ENCODE measurements at regions of chr6 and their contacts with region 1.

Region 1: GRCh38 chr6:49409951-49410542 is 53.0 kb downstream of the MMUT start:
- DNase-seq: peak; percentile 61
- ATAC-seq: peak; percentile 97
- H3K4me3 ChIP-seq: no peak overlapping the region
- H3K27ac ChIP-seq: no peak overlapping the region
- H3K4me1 ChIP-seq: no peaks in the 10 kb centered on the region
- H3K27me3 ChIP-seq: no peaks in the 10 kb centered on the region
- CTCF ChIP-seq: peak; percentile 84
- POLR2A ChIP-seq: no peak
- RAD21 ChIP-seq: peak; percentile 80

Region 2: DNA sequence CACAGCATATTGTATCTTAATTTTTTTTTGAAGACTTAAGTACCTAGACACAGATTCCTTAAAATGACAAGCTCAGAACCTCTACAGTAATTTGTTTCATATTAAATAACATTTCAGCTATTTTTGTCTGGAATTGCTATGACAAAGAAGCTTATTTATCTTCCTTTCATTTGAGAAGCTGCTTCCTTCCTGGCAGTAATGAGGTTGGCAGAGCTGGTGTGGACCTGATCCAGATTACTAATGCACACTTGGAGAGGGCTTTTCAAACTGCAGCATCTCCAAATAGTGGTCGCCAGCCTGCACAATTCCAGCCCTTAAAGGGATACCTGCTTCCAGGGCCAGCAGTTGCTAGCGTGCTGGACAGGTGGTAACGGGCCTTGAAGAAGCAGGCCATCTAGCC is 1311.1 kb before region 1 on chr6:
- CTCF ChIA-PET with region 1: no interaction called
- POLR2A ChIA-PET with region 1: no interaction called
- dilution Hi-C with region 1: no loop called
- in situ Hi-C with region 1: no loop called
- intact Hi-C with region 1: loop called (anchors 10 kb)
- DNase-seq: no peak
- ATAC-seq: no peak
- H3K4me3 ChIP-seq: no peak overlapping the region
- H3K27ac ChIP-seq: no peak overlapping the region
- H3K4me1 ChIP-seq: no peaks in the 10 kb centered on the region; the same call in 1 of the 2 replicates
- H3K27me3 ChIP-seq: no peaks in the 10 kb centered on the region
- CTCF ChIP-seq: no peak
- POLR2A ChIP-seq: no peak
- RAD21 ChIP-seq: no peak

Region 3: DNA sequence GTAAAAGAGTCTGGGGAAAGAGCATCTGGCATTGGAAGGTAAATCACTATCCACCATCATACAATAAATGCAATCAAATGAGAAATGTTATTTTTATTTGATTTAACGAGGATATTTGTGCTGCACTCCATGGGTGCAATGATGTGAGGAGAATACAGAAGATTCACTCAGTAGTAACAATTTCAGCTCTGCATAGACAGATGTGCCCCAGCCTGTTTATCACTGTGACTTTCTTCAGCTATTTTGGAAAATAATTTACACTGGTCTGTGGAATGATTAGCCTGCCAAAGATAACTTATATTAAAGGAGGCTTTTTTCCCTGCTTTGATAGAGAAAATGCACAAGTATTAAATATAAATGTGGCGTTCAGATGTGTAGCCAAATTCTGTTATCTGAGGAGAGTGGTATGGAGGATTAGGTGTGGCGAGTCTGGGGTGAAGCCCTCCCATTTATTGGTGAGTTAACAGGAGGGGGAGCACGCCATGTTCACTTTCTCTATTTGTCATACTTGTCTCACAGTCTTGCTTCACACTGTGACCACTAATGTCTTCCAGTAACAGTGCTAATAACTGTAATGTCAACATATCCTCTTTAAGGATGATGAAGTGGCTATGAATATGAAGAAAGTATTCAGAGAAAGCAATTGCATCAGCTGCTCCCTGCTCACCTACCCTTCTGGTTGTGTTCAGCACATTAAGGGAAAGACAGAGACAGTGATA is 592.6 kb before region 1 on chr6:
- CTCF ChIA-PET with region 1: no interaction called
- POLR2A ChIA-PET with region 1: no interaction called
- dilution Hi-C with region 1: no loop called
- in situ Hi-C with region 1: no loop called
- intact Hi-C with region 1: no loop called
- DNase-seq: peak; percentile 21
- ATAC-seq: peak; percentile 40; the same call in 1 of the 2 replicates
- H3K4me3 ChIP-seq: no peak overlapping the region
- H3K27ac ChIP-seq: no peak overlapping the region
- H3K4me1 ChIP-seq: peaks cover 2% of the 10 kb centered on the region; the same call in 1 of the 2 replicates
- H3K27me3 ChIP-seq: no peaks in the 10 kb centered on the region
- CTCF ChIP-seq: no peak
- POLR2A ChIP-seq: no peak
- RAD21 ChIP-seq: no peak

Region 4: DNA sequence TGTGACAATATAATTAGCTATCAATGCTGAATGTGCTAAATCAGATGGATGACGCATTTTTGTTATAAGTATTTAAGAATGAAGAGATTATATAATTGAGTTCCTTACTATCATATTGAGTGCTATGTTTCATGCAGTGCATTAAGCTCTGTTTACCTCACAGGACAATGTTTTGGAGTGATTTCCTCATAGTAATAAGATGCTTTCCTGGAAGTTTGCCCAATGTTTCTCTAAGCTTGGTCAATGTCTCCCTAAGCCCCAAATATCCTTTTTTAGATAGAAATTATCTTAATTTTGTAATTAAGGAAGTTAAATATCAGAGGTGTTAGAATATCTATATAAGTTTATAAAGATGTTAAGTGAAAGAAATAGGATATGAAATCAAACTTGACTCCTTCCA is 436.6 kb before region 1 on chr6:
- CTCF ChIA-PET with region 1: no interaction called
- POLR2A ChIA-PET with region 1: no interaction called
- dilution Hi-C with region 1: no loop called
- in situ Hi-C with region 1: no loop called
- intact Hi-C with region 1: no loop called
- DNase-seq: peak; percentile 15
- ATAC-seq: no peak
- H3K4me3 ChIP-seq: no peak overlapping the region
- H3K27ac ChIP-seq: no peak overlapping the region
- H3K4me1 ChIP-seq: no peaks in the 10 kb centered on the region; the same call in 1 of the 2 replicates
- H3K27me3 ChIP-seq: no peaks in the 10 kb centered on the region
- CTCF ChIP-seq: no peak
- POLR2A ChIP-seq: no peak
- RAD21 ChIP-seq: no peak

Region 5: DNA sequence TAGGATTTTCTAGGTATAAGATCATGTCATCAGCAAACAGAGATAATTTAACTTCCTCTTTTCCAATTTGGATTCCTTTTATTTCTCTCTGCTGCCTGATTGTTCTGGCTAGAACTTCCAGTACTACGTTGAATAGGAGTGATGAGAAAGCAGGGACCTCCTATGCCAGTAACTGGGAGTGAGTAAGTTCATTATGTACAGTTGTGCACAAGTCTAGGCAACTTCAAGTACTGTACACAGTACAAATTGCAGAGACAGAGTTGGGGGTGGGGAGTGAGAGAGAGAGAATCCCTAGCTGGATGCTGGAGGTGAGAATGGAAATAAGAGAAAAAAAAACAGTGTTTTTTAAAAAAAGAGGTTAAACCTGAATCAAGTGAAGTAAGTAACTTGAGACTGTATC is 157.1 kb before region 1 on chr6:
- CTCF ChIA-PET with region 1: no interaction called
- POLR2A ChIA-PET with region 1: no interaction called
- dilution Hi-C with region 1: no loop called
- in situ Hi-C with region 1: no loop called
- intact Hi-C with region 1: no loop called
- DNase-seq: no peak
- ATAC-seq: no peak
- H3K4me3 ChIP-seq: no peak overlapping the region
- H3K27ac ChIP-seq: no peak overlapping the region
- H3K4me1 ChIP-seq: no peaks in the 10 kb centered on the region
- H3K27me3 ChIP-seq: no peaks in the 10 kb centered on the region
- CTCF ChIP-seq: no peak
- POLR2A ChIP-seq: no peak
- RAD21 ChIP-seq: no peak

Measured in IMR-90 (cell line).